Stomach (tissue), 19 donors: ENCODE measurements at regions of chr16 and their contacts with region 1.

Region 1: DNA sequence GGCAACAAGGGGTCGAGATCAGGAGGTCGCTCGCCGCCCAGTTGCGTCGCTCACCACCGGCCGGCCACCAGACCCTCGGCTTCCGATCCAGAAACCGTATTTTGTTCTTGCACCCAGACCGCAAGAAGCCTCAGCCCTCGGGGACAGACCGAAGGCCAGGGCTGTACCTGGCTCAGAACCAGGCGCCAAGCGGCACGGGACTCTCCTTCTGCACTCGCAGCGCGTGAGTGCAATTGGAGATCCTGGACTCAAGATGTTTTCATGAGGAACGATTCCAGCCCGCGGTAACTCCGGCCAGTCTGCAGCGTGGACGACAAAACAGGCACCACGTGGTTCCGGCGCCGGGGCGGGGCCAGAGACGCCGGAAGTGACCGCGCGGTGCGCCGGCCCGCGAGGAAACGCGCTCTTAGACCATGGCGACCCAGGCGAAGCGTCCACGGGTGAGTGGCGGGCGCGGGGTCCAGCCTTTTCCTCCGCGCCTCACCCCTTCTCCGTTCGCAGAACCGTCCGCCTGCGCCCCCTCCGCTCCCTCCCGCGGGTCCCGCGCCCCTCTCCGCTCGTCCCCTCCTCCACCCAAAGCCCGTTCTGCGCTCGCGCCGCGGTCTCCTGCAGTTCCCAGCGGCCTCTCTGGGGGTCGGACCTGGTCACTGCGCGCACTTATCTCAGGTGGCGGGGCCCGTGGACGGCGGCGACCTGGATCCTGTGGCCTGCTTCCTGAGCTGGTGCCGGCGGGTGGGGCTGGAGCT is at the start of gene SETD6:
- DNase-seq: peak; percentile 89 to 96
- H3K4me3 ChIP-seq: peak within 1 kb of the TSS; percentile 90 to 97 (median 93)
- H3K27ac ChIP-seq: peak within 1 kb of the TSS; percentile 85 to 89 (median 88)
- H3K4me1 ChIP-seq: peaks cover 8 to 34% (median 29%) of the 10 kb centered on the region in 4 donors
- H3K27me3 ChIP-seq: no peaks in the 10 kb centered on the region
- CTCF ChIP-seq: peak in 2 of 7 experiments; percentile 20 to 36
- EP300 ChIP-seq: no peak
- POLR2A ChIP-seq: no peak
- total RNA-seq, gene SETD6: 13.0 to 209 (median 68.0) TPM

Region 2: DNA sequence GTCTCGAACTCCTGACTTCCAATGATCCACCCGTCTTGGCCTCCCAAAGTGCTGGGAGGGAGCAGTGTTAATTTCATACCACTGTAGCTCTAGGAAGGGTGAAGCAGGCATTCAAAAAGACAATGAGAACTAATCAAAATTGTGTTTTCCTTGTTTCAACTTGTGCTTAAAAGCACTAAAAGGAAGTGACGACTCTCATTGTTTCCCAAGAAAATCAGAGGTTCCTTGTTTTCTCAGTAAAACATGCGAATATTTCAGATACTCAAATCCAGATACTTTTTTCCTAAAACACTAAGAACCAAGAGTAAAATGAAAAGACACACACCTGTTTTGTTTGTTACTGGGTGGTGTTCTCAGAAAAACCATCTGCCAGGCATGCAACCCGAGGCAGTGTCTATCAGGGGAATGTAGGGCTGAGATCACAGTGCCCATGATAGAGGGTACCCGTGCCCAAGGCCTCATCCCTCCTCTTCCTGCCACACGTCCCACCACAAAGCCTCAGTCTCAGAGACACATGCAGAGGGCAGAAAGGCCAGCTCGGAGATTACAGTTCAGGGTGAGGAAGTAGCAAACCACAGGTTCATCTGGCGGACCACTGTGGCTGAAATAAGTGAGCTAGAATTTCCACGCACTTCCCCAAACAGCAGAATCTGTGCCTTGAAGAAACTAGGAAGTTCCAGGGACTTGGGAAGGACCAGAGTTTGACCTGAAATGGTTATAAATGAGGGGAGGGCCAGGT is 89.4 kb before region 1 on chr16:
- intact Hi-C with region 1: no loop called
- DNase-seq: peak in 1 of 2 donors; percentile 45
- H3K4me3 ChIP-seq: no peak overlapping the region
- H3K27ac ChIP-seq: no peak overlapping the region
- H3K4me1 ChIP-seq: no peaks in the 10 kb centered on the region
- H3K27me3 ChIP-seq: peaks cover 0 to 13% (median 0%) of the 10 kb centered on the region in 3 donors
- CTCF ChIP-seq: no peak
- EP300 ChIP-seq: no peak
- POLR2A ChIP-seq: no peak

Region 3: GRCh38 chr16:58661199-58661830 is 146.0 kb after region 1 on chr16:
- intact Hi-C with region 1: loop called (anchors 10 kb)
- DNase-seq: peak; percentile 41 to 89
- H3K4me3 ChIP-seq: no peak overlapping the region
- H3K27ac ChIP-seq: no peak overlapping the region
- H3K4me1 ChIP-seq: peaks cover 0 to 8% (median 0%) of the 10 kb centered on the region in 4 donors
- H3K27me3 ChIP-seq: no peaks in the 10 kb centered on the region
- CTCF ChIP-seq: peak in 4 of 7 experiments; percentile 8 to 38 (median 29)
- EP300 ChIP-seq: no peak
- POLR2A ChIP-seq: no peak

Region 4: GRCh38 chr16:58755989-58756649 is 240.8 kb after region 1 on chr16:
- intact Hi-C with region 1: no loop called
- DNase-seq: peak; percentile 71 to 91
- H3K4me3 ChIP-seq: no peak overlapping the region
- H3K27ac ChIP-seq: no peak overlapping the region
- H3K4me1 ChIP-seq: peaks cover 0 to 3% (median 1%) of the 10 kb centered on the region in 4 donors
- H3K27me3 ChIP-seq: no peaks in the 10 kb centered on the region
- CTCF ChIP-seq: peak in 5 of 7 experiments; percentile 37 to 51 (median 46)
- EP300 ChIP-seq: no peak
- POLR2A ChIP-seq: no peak